ENCODE measurements at regions of chr5 and their contacts with region 1.

Region 1: GRCh38 chr5:149828161-149828884 is 98.2 kb downstream of the PPARGC1B start:
- DNase-seq: peak; percentile 99
- H3K4me3 Mint-ChIP-seq: no peak overlapping the region
- H3K27ac Mint-ChIP-seq: peak overlapping the region; percentile 57
- H3K4me1 Mint-ChIP-seq: peaks cover 12% of the 10 kb centered on the region
- H3K27me3 Mint-ChIP-seq: no peaks in the 10 kb centered on the region
- CTCF ChIP-seq: peak; percentile 96

Region 2: DNA sequence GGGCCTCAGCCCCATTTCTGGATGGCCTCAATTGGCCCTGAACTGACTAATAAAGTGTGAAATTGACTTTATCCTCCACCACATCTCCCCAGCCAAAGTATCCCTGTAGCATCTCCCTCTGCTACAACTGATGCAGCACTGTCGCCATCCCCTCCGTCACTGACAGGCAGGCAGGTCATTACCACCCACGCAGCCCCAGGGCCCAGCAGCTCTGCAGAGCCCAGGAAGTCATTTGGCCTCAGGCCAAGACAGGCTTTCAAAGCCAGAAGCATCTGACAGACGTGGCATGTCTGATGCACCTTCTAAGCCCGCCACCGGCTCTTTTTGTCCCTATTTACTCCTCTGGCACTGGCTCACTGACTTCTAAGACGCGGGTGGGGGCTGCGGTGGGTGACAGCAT is 181.8 kb before region 1 on chr5:
- CTCF ChIA-PET with region 1: interaction called, 300 read pairs
- POLR2A ChIA-PET with region 1: no interaction called
- intact Hi-C with region 1: no loop called
- DNase-seq: peak; percentile 77
- H3K4me3 Mint-ChIP-seq: no peak overlapping the region
- H3K27ac Mint-ChIP-seq: no peak overlapping the region
- H3K4me1 Mint-ChIP-seq: peaks cover 5% of the 10 kb centered on the region
- H3K27me3 Mint-ChIP-seq: no peaks in the 10 kb centered on the region
- CTCF ChIP-seq: no peak

Region 3: GRCh38 chr5:149667084-149667828 is 161.1 kb before region 1 on chr5:
- CTCF ChIA-PET with region 1: interaction called, 26 read pairs
- POLR2A ChIA-PET with region 1: no interaction called
- intact Hi-C with region 1: loop called (anchors 1 kb)
- DNase-seq: peak; percentile 66
- H3K4me3 Mint-ChIP-seq: no peak overlapping the region
- H3K27ac Mint-ChIP-seq: no peak overlapping the region
- H3K4me1 Mint-ChIP-seq: peaks cover 8% of the 10 kb centered on the region
- H3K27me3 Mint-ChIP-seq: no peaks in the 10 kb centered on the region
- CTCF ChIP-seq: peak; percentile 96

Region 4: DNA sequence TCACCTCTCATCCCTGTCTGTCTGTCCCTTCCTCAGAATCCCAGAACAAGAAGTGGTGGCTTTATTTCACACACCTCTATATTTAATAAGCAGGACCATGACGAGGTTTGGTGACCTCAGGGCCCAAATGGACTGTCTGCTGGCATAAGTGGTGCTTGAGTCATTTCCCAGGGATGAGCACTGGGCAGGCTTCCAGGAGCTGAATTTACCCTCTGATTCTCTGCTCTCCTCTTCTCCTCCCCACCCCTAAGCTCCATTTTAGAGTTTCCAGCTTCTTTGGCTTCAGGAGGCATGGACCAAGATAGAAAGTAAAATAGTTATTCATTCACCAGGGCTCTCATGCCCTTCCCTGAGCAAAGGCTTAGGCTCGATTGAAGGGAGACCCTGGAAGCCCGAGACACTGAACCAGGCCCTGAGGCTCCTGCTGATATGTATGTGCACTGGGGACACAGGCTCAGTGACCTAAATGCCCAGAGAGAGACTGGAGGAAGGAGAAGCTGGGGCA is 29.2 kb before region 1 on chr5:
- CTCF ChIA-PET with region 1: interaction called, 20 read pairs
- POLR2A ChIA-PET with region 1: interaction called, 4 read pairs
- intact Hi-C with region 1: no loop called
- DNase-seq: peak; percentile 93
- H3K4me3 Mint-ChIP-seq: peak overlapping the region; percentile 12
- H3K27ac Mint-ChIP-seq: peak overlapping the region; percentile 43
- H3K4me1 Mint-ChIP-seq: peaks cover 38% of the 10 kb centered on the region
- H3K27me3 Mint-ChIP-seq: no peaks in the 10 kb centered on the region
- CTCF ChIP-seq: no peak

Region 5: DNA sequence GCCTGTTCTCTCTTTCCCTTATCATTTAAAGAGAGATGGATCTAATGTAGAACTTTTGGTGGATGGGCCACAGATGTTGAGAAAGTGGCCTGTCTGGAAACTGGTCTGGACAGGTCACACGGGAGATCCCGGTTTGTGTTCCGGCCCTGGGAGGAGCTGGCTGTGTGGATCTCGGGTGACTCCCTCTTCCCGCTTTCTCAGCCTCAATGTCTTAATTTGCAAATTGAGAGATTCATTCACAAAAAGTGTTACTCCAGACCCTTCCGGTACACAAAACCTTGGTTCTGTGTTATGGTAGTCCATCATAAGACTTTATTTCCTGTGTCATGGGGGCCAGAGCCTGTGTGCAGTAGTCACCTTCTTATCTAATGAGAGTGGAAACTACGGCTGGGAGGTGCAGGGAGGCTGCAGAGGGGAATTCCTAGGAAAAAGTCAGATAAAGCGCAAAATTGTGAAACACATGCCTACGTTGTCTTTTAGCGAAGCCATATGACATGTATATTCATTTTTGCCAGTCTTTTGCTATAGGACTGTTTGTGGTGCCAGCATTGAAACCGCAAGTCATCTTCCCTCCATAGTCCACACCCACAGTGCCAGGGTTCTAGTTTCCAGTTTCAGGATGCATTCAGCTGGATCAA is 17.6 kb before region 1 on chr5:
- CTCF ChIA-PET with region 1: interaction called, 48 read pairs
- POLR2A ChIA-PET with region 1: interaction called, 6 read pairs
- intact Hi-C with region 1: no loop called
- DNase-seq: no peak
- H3K4me3 Mint-ChIP-seq: no peak overlapping the region
- H3K27ac Mint-ChIP-seq: no peak overlapping the region
- H3K4me1 Mint-ChIP-seq: peaks cover 5% of the 10 kb centered on the region
- H3K27me3 Mint-ChIP-seq: no peaks in the 10 kb centered on the region
- CTCF ChIP-seq: no peak

Region 6: DNA sequence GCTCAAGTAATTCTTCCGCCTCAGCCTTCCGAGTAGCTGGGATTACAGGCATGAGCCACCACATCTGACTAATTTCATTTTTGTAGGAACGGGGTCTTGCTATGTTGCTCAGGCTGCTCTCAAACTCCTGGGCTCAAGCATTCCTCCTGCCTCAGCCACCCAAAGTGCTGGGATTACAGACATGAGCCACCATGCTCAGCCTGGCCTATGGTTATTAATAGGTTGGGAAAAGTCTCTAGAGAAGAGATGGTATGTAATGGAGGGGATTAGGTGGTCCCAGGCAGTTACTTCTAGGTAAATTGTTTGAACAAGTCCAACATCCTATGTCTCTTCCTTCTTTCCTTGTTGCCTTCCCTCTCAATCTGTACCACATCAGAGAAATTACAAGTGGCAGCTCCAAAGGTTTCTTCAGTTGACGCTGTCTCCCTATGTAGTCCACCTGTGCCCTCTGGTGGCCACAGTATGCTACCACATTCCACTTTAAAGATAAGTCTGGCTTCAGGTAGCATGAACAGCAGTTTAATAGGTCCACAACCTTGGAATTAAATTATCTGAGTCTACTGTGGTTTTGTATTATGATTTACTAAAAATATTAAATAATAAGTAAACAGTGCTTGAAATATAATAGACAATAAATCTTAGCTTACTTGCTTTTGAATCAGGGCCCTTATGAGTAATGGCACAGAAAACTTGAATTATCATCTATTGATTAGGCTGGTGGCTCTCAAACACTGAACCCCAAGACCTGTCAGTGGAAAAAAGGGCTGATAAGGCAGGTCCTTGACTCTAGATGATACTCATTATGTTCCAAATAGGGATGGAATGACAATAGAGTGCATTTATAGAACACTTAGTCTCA is 162.4 kb after region 1 on chr5:
- CTCF ChIA-PET with region 1: interaction called, 195 read pairs
- POLR2A ChIA-PET with region 1: interaction called, 4 read pairs
- intact Hi-C with region 1: no loop called
- DNase-seq: peak; percentile 91
- H3K4me3 Mint-ChIP-seq: no peak overlapping the region
- H3K27ac Mint-ChIP-seq: no peak overlapping the region
- H3K4me1 Mint-ChIP-seq: peaks cover 10% of the 10 kb centered on the region
- H3K27me3 Mint-ChIP-seq: no peaks in the 10 kb centered on the region
- CTCF ChIP-seq: peak; percentile 96